ENCODE measurements at regions of chr20 and their contacts with region 1.

Region 1: GRCh38 chr20:31674895-31675827 is 37.4 kb downstream of the COX4I2 start:
- DNase-seq: peak; percentile 71
- H3K4me3 Mint-ChIP-seq: peak overlapping the region; percentile 86
- H3K27ac Mint-ChIP-seq: peak overlapping the region; percentile 90
- H3K4me1 Mint-ChIP-seq: peaks cover 89% of the 10 kb centered on the region
- H3K27me3 Mint-ChIP-seq: no peaks in the 10 kb centered on the region

Region 2: GRCh38 chr20:31661625-31662371 is 13.4 kb before region 1 on chr20:
- intact Hi-C with region 1: loop called (anchors 1 kb)
- DNase-seq: peak; percentile 66
- H3K4me3 Mint-ChIP-seq: peak overlapping the region; percentile 72
- H3K27ac Mint-ChIP-seq: peak overlapping the region; percentile 88
- H3K4me1 Mint-ChIP-seq: peaks cover 54% of the 10 kb centered on the region
- H3K27me3 Mint-ChIP-seq: no peaks in the 10 kb centered on the region

Region 3: DNA sequence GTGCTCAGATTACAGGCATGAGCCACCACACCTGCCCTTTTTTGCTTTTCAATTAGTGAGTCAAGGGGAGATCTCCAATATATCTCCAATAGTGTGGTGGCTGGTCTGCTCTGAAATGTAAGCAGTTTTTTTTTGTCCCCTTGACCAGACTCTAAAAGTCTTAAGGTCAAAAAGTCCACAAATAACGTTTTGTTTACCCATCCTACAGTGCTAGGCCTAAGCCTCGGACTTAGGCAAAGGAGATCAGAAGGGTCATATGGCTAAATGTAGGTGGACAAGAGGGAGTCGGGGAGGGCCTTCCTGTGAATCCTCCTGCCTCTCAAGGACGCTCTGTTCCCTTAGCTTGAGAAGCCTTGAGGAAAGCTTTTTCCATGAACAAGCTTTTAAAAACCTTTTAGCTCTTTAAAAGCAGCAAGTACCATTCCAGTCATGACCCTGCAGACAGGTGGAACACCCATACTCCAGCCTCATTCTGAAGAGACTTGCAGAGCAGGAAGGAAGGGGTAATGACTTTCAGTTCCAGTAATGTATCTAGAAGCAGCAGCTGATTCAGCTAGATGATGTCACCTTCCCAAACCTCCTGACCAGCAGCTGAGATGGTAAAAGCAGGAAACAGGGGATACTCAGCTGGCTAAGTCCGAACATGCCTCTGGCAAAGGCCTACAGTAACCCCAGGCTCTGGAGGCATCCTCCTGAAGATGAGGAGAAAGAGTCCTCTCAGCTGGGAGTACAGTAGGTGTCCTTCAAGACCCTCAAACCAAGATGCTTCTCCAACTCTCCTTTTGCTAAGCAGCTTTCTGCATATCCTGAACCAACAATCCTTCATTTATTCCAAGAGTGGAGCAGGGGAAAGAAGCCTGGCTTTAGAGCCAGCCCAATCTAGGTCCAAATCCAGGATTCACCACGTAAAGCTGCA is 23.9 kb after region 1 on chr20:
- intact Hi-C with region 1: loop called (anchors 1 kb)
- DNase-seq: peak; percentile 33
- H3K4me3 Mint-ChIP-seq: peak overlapping the region; percentile 75
- H3K27ac Mint-ChIP-seq: peak overlapping the region; percentile 87
- H3K4me1 Mint-ChIP-seq: peaks cover 75% of the 10 kb centered on the region
- H3K27me3 Mint-ChIP-seq: no peaks in the 10 kb centered on the region

Region 4: DNA sequence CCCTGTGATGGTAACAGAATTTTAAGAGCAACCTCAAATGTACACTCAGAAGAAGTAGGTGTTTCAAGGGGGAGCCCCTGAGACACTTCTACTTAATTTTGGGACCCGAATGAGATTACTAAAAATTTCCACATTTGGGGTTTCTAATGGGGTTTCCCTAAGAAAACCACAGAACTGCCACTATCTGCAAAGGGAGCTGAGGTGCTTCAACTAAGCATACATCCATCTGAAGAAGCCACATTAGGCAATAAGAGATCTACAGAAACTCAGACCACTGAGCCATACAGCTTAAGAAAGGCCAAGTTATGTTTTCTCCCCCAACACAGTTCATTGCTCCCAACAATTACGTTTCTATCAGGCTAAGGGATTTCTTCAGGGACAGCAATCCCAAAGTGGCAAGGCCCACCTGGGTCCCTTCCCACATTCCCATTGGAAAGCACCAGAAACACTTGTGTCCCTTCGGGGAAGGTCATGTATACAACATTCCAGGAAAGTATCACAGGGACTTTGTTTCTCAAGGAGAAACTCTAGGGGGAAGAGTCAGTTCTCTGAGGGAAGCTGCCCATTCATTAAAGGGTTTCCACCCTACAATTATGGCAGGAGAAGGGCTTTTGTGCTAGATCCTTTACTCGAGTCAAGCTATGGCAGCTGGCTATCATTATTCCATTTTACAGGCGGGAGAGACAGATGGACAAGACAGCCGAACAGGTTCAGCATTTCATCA is 42.5 kb after region 1 on chr20:
- intact Hi-C with region 1: loop called (anchors 1 kb)
- DNase-seq: peak; percentile 36
- H3K4me3 Mint-ChIP-seq: peak overlapping the region; percentile 97
- H3K27ac Mint-ChIP-seq: peak overlapping the region; percentile 94
- H3K4me1 Mint-ChIP-seq: peaks cover 54% of the 10 kb centered on the region
- H3K27me3 Mint-ChIP-seq: no peaks in the 10 kb centered on the region

Measured in activated T-helper 1 cell treated with anti-CD3 and anti-CD28 coated beads, Interleukin-12 subunit alpha, Interleukin-12 subunit beta, Interleukin-2, Interleukin-4 antibody, amounts not matched to agents 30 ng/mL and 10 ng/mL and 1 ng/mL, durations not matched to agents 14 hours and 24 hours and 36 hours (primary cell).